ENCODE measurements at regions of chr11 and their contacts with region 1.

Region 1: DNA sequence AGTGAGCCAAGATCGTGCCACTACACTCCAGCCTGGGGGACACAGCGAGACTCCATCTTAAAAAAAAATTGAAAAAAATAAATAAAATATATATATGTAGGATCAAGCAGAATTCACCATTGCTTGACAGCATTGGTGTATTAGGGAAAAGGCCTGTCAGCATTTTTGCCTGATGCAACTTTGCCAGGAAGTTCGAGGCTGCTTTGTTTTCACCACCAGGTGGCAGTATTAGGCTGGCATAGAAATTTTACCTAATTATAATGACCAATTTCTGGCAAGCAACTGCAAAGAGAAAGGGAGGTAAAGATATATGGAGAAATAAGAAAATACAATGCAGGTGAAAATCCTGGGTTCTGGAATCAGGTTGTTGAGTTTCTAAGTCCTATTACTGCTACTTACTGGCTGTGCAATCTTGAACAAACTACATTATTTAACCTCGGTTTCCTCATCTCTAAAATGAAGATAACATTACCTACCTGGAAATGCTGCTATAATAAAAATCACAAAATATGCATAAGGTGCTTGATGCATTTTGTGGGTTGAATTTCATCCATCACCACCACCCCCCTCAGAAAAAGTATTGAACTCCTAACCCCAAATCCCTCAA is 24.7 kb downstream of the LAYN start:
- DNase-seq: no peak
- H3K4me3 ChIP-seq: no peak overlapping the region
- CTCF ChIP-seq: peak; percentile 62

Region 2: GRCh38 chr11:110833033-110833484 is 732.2 kb before region 1 on chr11:
- CTCF ChIA-PET with region 1: no interaction called
- POLR2A ChIA-PET with region 1: no interaction called
- DNase-seq: no peak
- H3K4me3 ChIP-seq: no peak overlapping the region
- CTCF ChIP-seq: no peak

Region 3: DNA sequence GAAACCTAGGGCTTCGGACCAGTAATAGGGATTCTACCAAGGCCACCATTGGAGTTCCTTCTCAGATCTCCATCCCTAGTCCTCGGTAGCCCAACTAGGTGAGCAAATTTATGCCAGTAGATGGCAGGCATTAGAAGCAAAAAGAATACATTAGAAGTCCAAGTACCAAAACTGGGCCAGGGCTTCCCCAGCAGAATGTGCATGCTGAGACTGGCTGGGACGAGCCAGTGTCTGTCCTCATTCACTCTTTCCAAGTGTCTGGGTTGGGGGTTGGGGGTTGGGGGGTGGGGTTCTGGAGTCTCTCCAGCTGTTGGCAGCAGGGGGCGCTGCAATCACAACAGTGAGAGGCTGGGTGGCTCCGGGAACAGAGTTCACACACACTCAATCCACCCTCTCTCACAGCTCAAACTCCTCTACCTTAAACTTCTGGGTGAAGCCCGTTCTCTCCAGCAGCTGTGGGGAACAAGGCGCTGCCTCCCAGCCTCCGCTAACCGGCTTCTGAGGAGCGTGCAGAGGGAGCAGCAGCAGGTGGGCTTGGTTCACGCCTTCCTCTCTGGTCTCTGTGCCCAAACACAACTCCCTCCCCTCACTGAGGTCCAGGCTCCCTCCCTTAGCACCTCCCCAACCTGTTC is 110.5 kb before region 1 on chr11:
- CTCF ChIA-PET with region 1: interaction called, 69 read pairs
- POLR2A ChIA-PET with region 1: no interaction called
- DNase-seq: peak; percentile 5
- H3K4me3 ChIP-seq: no peak overlapping the region
- CTCF ChIP-seq: peak; percentile 69

Region 4: GRCh38 chr11:111833524-111833923 is 268.3 kb after region 1 on chr11:
- CTCF ChIA-PET with region 1: interaction called, 13 read pairs
- POLR2A ChIA-PET with region 1: no interaction called
- DNase-seq: no peak
- H3K4me3 ChIP-seq: no peak overlapping the region
- CTCF ChIP-seq: no peak

Region 5: DNA sequence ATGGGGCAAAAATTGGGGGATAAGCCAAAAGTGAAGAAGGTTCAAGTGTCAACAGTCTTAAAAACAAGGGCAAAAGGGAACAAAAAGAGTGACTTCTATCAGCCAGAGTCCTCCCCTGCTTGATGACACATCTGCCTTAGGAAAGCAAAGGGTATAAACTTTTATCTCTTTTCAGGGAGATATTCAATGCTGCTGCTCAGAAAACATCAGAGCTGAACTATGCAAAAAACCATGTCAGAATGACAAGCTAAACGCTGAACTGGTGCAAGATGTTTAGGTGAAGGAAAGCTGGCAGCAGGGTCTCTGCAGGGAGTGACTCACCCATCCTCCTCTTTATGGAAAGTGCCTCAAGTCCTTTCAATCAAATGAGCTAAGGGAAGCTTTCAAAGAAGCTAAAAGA is 281.4 kb after region 1 on chr11:
- CTCF ChIA-PET with region 1: interaction called, 20 read pairs
- POLR2A ChIA-PET with region 1: no interaction called
- DNase-seq: no peak
- H3K4me3 ChIP-seq: no peak overlapping the region
- CTCF ChIP-seq: no peak

Measured in AG04449 (cell line).